ENCODE measurements at regions of chr18 and their contacts with region 1.

Region 1: GRCh38 chr18:74896390-74896991 is 298.8 kb downstream of the ZNF407 start:
- DNase-seq: peak; percentile 80
- ATAC-seq: peak; percentile 96
- H3K4me3 ChIP-seq: no peak overlapping the region
- H3K27ac ChIP-seq: no peak overlapping the region
- H3K4me1 ChIP-seq: peaks cover 20% of the 10 kb centered on the region
- H3K27me3 ChIP-seq: no peaks in the 10 kb centered on the region
- CTCF ChIP-seq: peak; percentile 92

Region 2: GRCh38 chr18:74722237-74722636 is 174.3 kb before region 1 on chr18:
- CTCF ChIA-PET with region 1: no interaction called
- POLR2A ChIA-PET with region 1: no interaction called
- in situ Hi-C with region 1: no loop called
- intact Hi-C with region 1: no loop called
- DNase-seq: no peak
- ATAC-seq: no peak
- H3K4me3 ChIP-seq: no peak overlapping the region
- H3K27ac ChIP-seq: no peak overlapping the region
- H3K4me1 ChIP-seq: no peaks in the 10 kb centered on the region
- H3K27me3 ChIP-seq: no peaks in the 10 kb centered on the region
- CTCF ChIP-seq: no peak

Region 3: DNA sequence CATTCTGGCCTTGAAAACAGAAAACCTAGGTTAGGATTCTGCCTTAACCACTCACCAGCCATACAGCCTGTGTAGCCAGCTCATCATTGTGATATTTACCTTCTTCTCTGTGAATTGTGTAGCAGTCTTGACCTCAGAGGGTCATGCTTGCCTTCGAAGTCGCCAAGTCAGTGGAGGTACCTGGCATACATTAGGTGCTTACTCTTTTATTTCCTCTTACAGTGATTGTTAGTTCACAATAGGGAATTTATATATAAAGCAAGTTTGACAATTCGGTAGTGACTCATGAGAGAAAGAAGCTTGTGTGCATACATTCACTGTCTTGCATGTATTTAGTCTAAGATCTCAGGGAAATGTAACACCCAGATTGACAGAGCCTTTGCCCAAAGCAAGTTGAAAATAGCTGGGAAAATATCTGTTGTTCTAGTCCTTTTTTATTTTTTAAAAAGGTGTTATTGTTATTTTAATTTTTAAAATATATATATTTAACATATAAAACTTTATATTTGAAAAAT is 21.8 kb after region 1 on chr18:
- CTCF ChIA-PET with region 1: no interaction called
- POLR2A ChIA-PET with region 1: no interaction called
- in situ Hi-C with region 1: no loop called
- intact Hi-C with region 1: no loop called
- DNase-seq: no peak
- ATAC-seq: no peak
- H3K4me3 ChIP-seq: no peak overlapping the region
- H3K27ac ChIP-seq: no peak overlapping the region
- H3K4me1 ChIP-seq: no peaks in the 10 kb centered on the region
- H3K27me3 ChIP-seq: no peaks in the 10 kb centered on the region
- CTCF ChIP-seq: no peak

Region 4: GRCh38 chr18:74963820-74964446 is 67.4 kb after region 1 on chr18:
- CTCF ChIA-PET with region 1: no interaction called
- POLR2A ChIA-PET with region 1: no interaction called
- in situ Hi-C with region 1: no loop called
- intact Hi-C with region 1: loop called (anchors 2 kb)
- DNase-seq: peak; percentile 73
- ATAC-seq: peak; percentile 98
- H3K4me3 ChIP-seq: no peak overlapping the region
- H3K27ac ChIP-seq: no peak overlapping the region
- H3K4me1 ChIP-seq: no peaks in the 10 kb centered on the region
- H3K27me3 ChIP-seq: no peaks in the 10 kb centered on the region
- CTCF ChIP-seq: peak; percentile 84

Region 5: GRCh38 chr18:75041586-75041985 is 145.1 kb after region 1 on chr18:
- CTCF ChIA-PET with region 1: interaction called, 5 read pairs
- POLR2A ChIA-PET with region 1: interaction called, 5 read pairs
- in situ Hi-C with region 1: no loop called
- intact Hi-C with region 1: loop called (anchors 5 kb)
- DNase-seq: peak; percentile 30
- ATAC-seq: peak; percentile 90
- H3K4me3 ChIP-seq: no peak overlapping the region
- H3K27ac ChIP-seq: no peak overlapping the region
- H3K4me1 ChIP-seq: no peaks in the 10 kb centered on the region
- H3K27me3 ChIP-seq: no peaks in the 10 kb centered on the region
- CTCF ChIP-seq: peak; percentile 84

Region 6: GRCh38 chr18:75209129-75209950 is 312.8 kb after region 1 on chr18 and contains the start of gene PTGR3:
- CTCF ChIA-PET with region 1: no interaction called
- POLR2A ChIA-PET with region 1: no interaction called
- in situ Hi-C with region 1: no loop called
- intact Hi-C with region 1: loop called (anchors 5 kb)
- DNase-seq: peak; percentile 55
- ATAC-seq: peak; percentile 82
- H3K4me3 ChIP-seq: peak within 1 kb of the TSS; percentile 84 to 89
- H3K27ac ChIP-seq: peak within 1 kb of the TSS; percentile 95
- H3K4me1 ChIP-seq: peaks cover 51% of the 10 kb centered on the region
- H3K27me3 ChIP-seq: no peaks in the 10 kb centered on the region
- CTCF ChIP-seq: no peak
- total RNA-seq, gene PTGR3: 45.0 TPM

Measured in Panc1 (cell line).